ACHN (cell line): ENCODE measurements at regions of chr17 and their contacts with region 1.

Region 1: GRCh38 chr17:64262417-64263260 is at the start of gene TEX2:
- DNase-seq: peak; percentile 28

Region 2: DNA sequence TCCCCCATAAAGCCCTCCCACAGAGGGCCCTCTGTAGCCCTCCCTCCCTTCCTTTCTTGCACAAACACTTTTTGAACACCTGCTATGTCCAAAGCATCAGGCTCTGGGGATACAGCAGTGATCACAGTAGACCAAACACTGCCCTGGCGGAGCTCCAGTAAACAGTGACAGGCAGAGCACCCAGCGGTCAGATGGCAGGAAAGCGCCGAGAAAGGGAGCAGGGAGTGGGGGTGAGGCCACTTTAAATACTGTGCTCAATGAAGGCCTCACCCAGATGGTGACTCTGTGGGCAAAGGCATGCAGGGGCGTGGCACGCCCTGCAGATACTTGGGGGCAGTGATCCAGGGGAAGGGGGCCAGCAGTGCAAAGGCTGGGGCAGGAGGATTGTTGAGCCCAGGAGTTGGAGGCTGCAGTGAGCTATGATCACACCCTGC is 256.9 kb before region 1 on chr17:
- in situ Hi-C with region 1: no loop called
- DNase-seq: peak; percentile 33

Region 3: DNA sequence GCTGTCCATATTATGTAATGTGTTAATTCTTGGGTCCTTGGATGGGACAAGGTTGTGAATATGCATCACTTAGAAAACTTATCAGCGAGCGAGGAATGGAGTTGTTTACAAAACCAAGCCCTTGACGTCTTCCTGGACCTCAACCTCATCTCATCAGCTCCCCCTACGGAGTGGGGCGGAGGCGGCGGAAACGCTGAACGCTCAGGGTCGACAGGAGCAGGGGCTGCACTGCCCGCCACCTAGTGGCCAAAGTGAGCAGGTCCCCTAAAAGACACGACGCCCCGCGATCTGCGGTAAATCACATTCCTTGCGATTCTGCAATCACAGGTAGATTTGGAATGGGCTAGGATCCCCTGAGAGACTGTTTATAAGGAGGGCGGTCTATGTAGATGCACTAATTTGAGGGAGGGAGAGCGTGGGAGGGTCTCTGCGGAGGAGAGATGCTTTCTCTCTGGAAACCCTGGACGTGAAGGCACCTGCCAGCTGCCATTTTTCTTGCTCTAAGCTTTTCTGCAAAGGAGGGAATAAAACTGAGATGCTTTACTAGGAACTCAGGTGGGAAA is 236.8 kb before region 1 on chr17:
- in situ Hi-C with region 1: loop called (anchors 25 kb)
- DNase-seq: peak; percentile 83

Region 4: DNA sequence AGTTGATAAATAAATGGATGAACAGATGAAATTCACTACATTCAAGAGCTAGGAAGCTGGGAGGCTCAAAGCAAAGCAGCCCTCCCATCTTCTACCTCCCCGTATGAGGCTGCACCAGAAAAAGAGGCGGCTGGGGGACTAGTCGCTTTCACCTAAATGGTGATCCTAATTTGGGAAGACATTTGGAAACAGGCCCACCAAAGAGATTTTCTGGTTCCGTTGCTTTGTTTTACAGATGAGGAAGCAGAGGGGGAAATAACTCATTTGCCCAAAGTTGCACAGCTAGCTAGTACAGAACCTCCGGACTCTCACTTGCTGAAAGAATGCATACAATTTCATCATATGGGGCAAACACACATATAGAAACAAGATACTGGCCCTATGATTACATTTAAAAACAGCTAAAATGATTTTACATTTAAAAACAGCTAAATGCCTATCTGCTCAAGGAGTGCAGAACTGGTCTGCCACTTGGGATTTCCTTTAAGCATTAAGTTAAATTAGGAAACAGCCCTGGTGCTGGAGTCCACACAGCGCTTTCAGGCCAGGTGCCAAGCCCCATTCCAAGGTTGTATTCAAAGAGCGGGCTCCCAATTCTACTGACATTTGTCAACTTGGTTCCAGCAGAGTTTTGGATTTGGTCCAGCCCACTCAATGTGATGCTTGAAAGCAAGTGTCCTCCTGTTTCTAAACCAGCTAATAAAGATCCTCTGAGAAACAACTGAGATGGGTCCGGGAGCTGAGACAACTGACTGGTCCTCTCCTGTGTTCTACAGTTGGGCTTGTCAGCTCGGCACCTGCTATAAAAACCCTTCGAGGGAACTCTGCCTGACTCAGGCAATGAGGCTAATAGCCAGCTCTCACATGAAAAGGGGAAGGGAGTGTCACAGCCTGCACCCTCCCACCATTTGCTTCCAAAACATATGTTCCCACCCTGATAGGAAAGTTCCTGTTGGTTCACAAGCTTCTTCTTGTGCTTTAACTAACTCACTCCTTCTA is 144.4 kb before region 1 on chr17:
- in situ Hi-C with region 1: no loop called
- DNase-seq: no peak

Region 5: DNA sequence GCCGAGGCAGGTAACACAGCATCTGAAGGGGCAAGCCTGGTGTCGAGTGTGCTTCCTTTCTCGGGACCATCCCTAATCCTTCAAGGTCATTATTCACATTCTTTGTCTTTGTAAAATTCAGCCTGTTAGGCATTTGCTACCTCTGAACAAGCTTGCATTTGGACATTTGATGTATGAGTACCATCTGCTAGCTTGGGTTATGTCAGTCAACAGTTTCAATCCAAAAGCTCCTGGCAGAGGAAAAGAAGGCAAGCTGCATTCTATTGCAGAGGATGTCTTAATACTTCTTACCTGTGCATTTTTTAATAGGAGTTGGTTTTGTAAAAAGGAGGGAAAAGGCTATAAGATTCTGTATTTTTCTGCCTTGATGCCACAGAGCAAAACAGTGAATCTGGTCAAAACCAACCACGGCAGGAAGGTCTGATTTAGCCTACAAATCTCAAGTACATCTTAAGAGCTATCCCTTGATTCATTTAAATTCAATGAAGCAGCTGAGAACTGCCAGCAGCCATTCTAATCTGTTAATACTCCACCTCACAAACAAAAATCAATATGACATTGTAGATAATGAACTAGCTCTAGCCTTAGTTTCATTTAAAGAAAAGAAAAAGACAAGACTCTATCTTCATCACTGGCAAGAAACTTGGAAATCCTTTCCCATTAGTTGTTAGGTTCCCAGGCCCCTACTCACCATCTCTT is 38.6 kb before region 1 on chr17:
- in situ Hi-C with region 1: no loop called
- DNase-seq: no peak